Activated CD4-positive, alpha-beta memory T cell treated with anti-CD3 and anti-CD28 coated beads for 36 hours (primary cell): ENCODE measurements at regions of chr14 and their contacts with region 1.

Region 1: GRCh38 chr14:24114536-24115450 is at the starts of genes DCAF11 and NRL:
- DNase-seq: peak; percentile 99
- H3K4me3 Mint-ChIP-seq: peak within 1 kb of the TSS; percentile 95
- H3K27ac Mint-ChIP-seq: peak within 1 kb of the TSS; percentile 100
- H3K4me1 Mint-ChIP-seq: peaks cover 24% of the 10 kb centered on the region
- H3K27me3 Mint-ChIP-seq: no peaks in the 10 kb centered on the region
- total RNA-seq, gene DCAF11: 85.6 to 91.8 TPM
- total RNA-seq, gene NRL: 1.2 to 1.9 TPM

Region 2: DNA sequence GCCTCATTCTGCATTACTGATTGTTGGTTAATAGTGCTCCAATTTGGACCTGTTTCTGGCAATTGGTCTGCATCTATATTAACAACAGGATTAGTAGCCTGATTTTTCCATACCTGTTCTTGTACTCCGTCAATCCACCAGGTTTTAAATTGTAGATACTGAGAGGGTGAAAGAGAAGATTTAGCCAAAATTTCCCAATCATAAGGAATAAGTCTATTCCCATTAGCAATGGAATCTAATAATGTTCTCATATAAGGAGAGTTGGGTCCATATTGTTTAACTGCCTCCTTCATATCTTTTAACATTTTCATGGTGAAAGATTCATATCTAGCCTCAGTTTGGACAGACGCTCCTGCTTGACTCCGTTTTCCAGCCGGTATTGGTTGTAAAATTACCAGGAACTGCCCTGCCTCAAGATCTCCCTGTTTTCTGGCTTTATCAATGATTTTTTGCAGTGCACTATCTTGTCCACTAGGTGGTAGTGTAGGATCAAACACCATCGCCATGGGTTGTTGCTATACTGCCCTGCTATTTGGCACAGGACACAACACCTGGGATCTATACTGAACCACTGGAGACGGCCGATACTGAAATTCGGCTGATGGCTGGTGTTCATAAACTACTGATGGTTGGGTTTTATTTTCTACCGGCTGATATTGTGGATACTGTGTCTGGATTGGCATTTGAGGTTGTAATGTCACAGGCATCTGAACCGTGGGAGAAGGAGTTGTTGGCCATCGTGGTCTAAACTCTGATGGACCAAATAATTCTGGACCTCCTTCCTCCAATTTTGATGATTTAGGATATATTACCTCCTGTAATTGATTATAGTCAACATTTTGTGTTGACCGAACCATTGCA is 100.9 kb before region 1 on chr14:
- CTCF ChIA-PET with region 1: interaction called, 5 read pairs
- POLR2A ChIA-PET with region 1: no interaction called
- intact Hi-C with region 1: loop called (anchors 1 kb)
- DNase-seq: peak; percentile 53
- H3K4me3 Mint-ChIP-seq: no peak overlapping the region
- H3K27ac Mint-ChIP-seq: no peak overlapping the region
- H3K4me1 Mint-ChIP-seq: peaks cover 24% of the 10 kb centered on the region
- H3K27me3 Mint-ChIP-seq: peaks cover 6% of the 10 kb centered on the region

Region 3: DNA sequence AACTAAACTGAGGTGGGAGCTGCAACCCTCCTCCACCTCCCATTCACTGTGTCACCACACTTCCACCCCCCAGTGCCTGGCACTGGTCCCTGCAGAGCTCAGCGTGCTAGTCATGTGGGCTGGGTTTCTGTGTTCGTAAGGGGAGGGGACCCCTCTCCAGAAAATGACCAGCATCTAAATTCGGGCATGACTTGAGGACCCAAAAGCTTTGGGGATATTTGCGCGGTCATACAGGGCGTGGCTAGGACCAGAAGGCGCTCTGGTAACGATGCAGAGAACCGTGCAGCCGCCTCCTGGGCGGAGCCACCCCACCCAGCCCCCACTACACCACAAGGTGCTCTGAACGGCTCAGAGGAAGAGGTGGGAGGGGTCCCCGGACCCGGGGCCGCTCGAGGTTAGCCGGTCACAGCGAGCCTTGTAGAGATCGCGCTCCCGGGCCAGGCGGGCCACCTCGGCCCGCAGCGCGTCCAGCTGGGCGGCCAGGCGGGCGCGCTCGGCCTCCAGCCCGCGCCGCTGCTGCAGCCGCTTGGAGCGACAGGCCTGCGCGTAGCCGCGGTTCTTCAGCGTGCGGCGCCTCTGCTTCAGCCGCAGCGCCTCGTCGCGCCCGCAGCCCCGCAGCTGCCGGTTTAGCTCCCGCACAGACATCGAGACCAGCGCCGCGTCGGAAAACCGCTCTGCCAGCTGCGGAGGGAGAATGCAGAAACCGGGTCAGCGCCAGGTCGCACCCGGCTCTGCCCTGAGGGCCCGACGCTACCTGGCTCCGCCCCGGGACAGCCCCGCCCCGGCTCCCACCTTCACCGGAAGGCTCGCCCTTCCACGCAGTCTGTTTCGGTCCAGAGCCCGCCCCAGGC is 33.7 kb before region 1 on chr14:
- CTCF ChIA-PET with region 1: interaction called, 17 read pairs
- POLR2A ChIA-PET with region 1: interaction called, 12 read pairs
- intact Hi-C with region 1: no loop called
- DNase-seq: peak; percentile 85
- H3K4me3 Mint-ChIP-seq: peak overlapping the region; percentile 72
- H3K27ac Mint-ChIP-seq: peak overlapping the region; percentile 49
- H3K4me1 Mint-ChIP-seq: peaks cover 16% of the 10 kb centered on the region
- H3K27me3 Mint-ChIP-seq: no peaks in the 10 kb centered on the region

Region 4: DNA sequence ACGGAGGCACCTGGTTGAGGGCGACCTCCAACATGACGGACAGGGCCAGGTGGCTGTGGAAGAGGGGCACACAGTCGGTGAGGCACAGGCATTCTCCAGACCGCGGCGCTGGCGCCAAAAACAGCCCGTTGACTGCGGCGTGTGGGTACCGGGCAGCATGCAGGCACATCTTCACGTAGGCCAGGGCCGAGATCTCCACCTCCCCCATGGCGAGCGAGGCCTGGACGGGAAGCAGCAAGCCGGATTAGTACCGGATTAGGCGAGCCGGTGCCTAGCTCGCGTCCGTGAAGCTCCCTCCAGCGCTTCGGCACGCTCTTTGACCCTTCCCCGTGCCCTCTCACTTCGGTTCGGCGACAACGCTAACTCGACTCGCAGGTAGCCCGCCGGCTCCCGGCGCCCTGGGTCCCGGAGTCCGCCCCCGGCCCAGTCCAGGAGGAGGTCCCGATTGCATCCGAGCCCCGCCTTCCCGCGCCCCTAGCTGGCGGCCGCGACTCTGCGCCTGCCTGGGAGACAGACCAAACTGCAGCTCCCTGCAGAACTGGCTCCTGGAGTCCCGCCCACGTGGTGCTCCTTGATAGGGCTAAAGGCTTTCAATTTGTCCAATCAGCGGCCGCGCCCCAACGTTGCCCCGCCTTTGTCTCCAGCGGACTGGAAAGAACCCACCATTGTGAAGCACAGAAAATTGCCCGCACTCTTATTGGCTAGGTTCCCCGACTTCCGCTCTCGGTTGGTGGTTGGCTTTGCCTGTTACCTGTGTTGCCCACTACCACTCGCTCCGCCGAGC is 26.5 kb after region 1 on chr14 and contains the start of gene EMC9:
- CTCF ChIA-PET with region 1: interaction called, 16 read pairs
- POLR2A ChIA-PET with region 1: interaction called, 73 read pairs
- intact Hi-C with region 1: loop called (anchors 1 kb)
- DNase-seq: peak; percentile 100
- H3K4me3 Mint-ChIP-seq: peak within 1 kb of the TSS; percentile 97
- H3K27ac Mint-ChIP-seq: peak within 1 kb of the TSS; percentile 94
- H3K4me1 Mint-ChIP-seq: peaks cover 65% of the 10 kb centered on the region
- H3K27me3 Mint-ChIP-seq: no peaks in the 10 kb centered on the region
- total RNA-seq, gene EMC9: 40.0 to 40.9 TPM

Region 5: GRCh38 chr14:24215495-24216344 is 100.9 kb after region 1 on chr14 and contains the start of gene MDP1:
- CTCF ChIA-PET with region 1: interaction called, 3 read pairs
- POLR2A ChIA-PET with region 1: interaction called, 4 read pairs
- intact Hi-C with region 1: loop called (anchors 1 kb)
- DNase-seq: peak; percentile 92
- H3K4me3 Mint-ChIP-seq: peak within 1 kb of the TSS; percentile 84
- H3K27ac Mint-ChIP-seq: peak within 1 kb of the TSS; percentile 94
- H3K4me1 Mint-ChIP-seq: peaks cover 41% of the 10 kb centered on the region
- H3K27me3 Mint-ChIP-seq: no peaks in the 10 kb centered on the region
- total RNA-seq, gene MDP1: 14.2 to 15.8 TPM

Region 6: GRCh38 chr14:24442273-24443052 is 327.7 kb after region 1 on chr14 and contains the start of gene SDR39U1:
- CTCF ChIA-PET with region 1: no interaction called
- POLR2A ChIA-PET with region 1: no interaction called
- intact Hi-C with region 1: loop called (anchors 1 kb)
- DNase-seq: peak; percentile 98
- H3K4me3 Mint-ChIP-seq: peak within 1 kb of the TSS; percentile 95
- H3K27ac Mint-ChIP-seq: peak within 1 kb of the TSS; percentile 99
- H3K4me1 Mint-ChIP-seq: peaks cover 43% of the 10 kb centered on the region
- H3K27me3 Mint-ChIP-seq: no peaks in the 10 kb centered on the region
- total RNA-seq, gene SDR39U1: 36.2 to 43.8 TPM